ENCODE measurements at regions of chr17 and their contacts with region 1.

Region 1: GRCh38 chr17:19554377-19554776 is 20.7 kb downstream of the SLC47A1 start:
- DNase-seq: no peak
- ATAC-seq: peak in 7 of 8 donors; percentile 59 to 84 (median 73)
- H3K4me3 ChIP-seq: no peak overlapping the region
- H3K27ac ChIP-seq: peak overlapping the region in 6 of 10 donors; percentile 7 to 66 (median 52)
- H3K4me1 ChIP-seq: peaks cover 0 to 7% (median 0%) of the 10 kb centered on the region in 9 donors
- H3K27me3 ChIP-seq: peaks cover 0 to 4% (median 0%) of the 10 kb centered on the region in 7 donors
- CTCF ChIP-seq: peak in 1 of 9 donors; percentile 5

Region 2: GRCh38 chr17:19494961-19495806 is 59.2 kb before region 1 on chr17:
- intact Hi-C with region 1: loop called in 1 of 10 experiments (anchors 10 kb)
- DNase-seq: no peak
- ATAC-seq: peak in 1 of 8 donors; percentile 38
- H3K4me3 ChIP-seq: no peak overlapping the region
- H3K27ac ChIP-seq: no peak overlapping the region
- H3K4me1 ChIP-seq: no peaks in the 10 kb centered on the region
- H3K27me3 ChIP-seq: no peaks in the 10 kb centered on the region
- CTCF ChIP-seq: no peak

Region 3: GRCh38 chr17:19590912-19591551 is 36.7 kb after region 1 on chr17:
- intact Hi-C with region 1: no loop called
- DNase-seq: no peak
- ATAC-seq: no peak
- H3K4me3 ChIP-seq: no peak overlapping the region
- H3K27ac ChIP-seq: no peak overlapping the region
- H3K4me1 ChIP-seq: peaks cover 0 to 4% (median 0%) of the 10 kb centered on the region in 9 donors
- H3K27me3 ChIP-seq: peaks cover 0 to 4% (median 0%) of the 10 kb centered on the region in 7 donors
- CTCF ChIP-seq: no peak

Region 4: DNA sequence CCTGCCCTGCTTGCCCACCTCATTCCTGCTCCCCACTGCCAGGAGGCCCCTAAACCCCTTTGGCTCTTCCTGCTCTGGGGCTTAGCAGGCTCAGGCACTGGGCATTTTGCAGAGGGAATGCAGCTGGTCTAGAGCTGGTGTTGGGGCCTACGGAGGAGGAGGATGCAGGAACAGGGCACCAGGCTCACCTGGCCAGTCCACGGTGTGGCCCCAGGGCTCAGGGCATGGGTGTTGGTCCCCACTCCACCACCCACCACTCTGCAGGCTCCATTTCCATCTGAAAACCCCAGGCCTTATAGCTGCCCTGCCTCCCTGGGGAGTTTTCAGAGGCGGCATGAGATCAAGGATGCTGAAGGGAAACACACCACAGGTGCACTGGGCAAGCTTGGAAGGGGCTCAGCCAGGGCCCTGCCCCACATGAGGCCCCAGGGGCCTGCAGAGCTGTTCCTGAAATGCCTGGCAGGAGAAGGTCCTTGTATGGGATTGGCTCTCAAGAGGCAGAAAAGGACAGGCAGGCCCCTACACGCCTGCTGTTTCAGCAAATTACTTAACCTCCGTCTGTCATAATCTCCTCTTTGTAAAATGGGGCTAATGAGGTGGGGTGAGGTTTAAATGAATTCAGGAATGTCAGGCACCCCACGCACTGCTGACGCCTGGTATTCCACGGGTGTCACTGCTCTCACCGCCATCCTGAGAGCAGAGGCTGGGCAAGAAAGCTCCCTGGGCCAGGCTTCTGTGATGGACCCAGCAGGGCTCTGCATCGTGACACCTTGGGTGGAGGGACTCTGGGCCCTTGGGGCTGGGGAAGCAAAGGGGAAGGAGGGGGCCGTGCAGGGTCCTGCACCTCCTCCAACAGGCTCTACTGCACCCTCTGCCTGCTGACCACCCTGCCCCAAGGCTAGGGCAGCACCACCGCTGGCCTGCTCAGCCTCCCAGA is 152.7 kb after region 1 on chr17:
- intact Hi-C with region 1: no loop called
- DNase-seq: no peak
- ATAC-seq: peak in 1 of 8 donors; percentile 10
- H3K4me3 ChIP-seq: no peak overlapping the region
- H3K27ac ChIP-seq: no peak overlapping the region
- H3K4me1 ChIP-seq: peaks cover 0 to 28% (median 20%) of the 10 kb centered on the region in 9 donors
- H3K27me3 ChIP-seq: no peaks in the 10 kb centered on the region
- CTCF ChIP-seq: no peak

Measured in heart right ventricle (tissue), 16 donors.